Lower leg skin (tissue), 4 donors: ENCODE measurements at regions of chr13 and their contacts with region 1.

Region 1: DNA sequence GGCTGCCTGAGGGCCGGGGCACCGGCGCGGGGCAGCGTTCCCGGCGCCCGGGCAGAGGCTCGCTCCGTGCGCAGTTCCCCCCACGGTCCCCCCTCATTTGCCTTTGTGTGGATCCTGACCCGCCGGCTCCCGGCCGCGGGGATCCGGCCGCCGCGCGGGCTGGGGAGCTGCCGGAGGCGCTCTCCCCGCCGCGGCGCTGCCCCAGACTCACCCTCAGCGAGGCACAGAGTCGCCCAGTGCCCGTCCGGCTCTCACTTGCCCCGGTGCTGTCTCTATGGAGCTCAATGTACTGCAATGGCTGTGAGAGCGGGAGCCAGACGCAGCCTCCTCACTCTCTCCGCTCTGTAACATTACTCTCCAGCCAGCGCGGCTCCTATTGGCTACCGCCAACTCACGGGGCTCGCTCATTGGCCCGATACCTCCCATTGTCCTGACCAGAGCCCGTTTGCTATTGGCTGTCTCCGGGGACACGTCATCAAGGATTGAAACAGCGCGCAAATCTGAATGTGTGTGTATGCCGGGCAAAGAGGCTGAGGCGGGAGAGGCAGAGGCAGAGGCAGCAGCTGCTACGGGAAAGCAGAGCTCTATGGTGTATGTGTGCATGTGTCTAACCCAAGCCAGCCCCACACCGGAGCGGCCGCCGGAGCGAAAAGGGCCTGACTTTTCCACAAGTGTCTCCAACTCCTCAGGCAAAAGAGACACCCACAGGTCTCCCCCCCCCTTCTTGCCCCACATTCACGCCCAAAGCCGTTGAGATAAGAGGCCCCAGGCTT is at the start of gene HMGB1:
- DNase-seq: peak; percentile 99 to 100
- H3K4me3 ChIP-seq: peak within 1 kb of the TSS; percentile 73
- CTCF ChIP-seq: no peak
- POLR2A ChIP-seq: peak in 1 of 2 donors; percentile 75
- total RNA-seq, gene HMGB1: 158 to 262 (median 208) TPM

Region 2: DNA sequence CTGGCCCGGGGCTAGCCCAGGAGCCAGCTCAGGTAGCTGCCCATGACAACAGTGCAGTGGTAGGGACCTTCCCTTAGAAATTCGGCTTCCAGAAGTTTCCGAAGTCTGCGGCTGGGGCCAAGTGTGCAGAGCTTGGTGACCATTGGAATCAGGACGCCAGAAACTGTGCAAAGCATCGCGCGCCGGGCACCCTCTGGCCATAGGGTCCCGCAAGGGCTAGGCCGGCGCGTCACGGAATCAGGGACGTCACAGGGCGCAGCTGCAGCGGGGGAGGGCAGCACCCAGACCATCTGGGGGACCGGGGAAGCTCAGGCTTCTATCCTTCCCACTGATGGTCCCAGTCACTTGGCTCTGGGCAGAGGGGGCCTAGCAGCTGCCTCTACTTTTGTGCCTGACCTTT is 1426.6 kb before region 1 on chr13:
- intact Hi-C with region 1: no loop called
- DNase-seq: no peak
- H3K4me3 ChIP-seq: no peak overlapping the region
- CTCF ChIP-seq: no peak
- POLR2A ChIP-seq: no peak

Region 3: DNA sequence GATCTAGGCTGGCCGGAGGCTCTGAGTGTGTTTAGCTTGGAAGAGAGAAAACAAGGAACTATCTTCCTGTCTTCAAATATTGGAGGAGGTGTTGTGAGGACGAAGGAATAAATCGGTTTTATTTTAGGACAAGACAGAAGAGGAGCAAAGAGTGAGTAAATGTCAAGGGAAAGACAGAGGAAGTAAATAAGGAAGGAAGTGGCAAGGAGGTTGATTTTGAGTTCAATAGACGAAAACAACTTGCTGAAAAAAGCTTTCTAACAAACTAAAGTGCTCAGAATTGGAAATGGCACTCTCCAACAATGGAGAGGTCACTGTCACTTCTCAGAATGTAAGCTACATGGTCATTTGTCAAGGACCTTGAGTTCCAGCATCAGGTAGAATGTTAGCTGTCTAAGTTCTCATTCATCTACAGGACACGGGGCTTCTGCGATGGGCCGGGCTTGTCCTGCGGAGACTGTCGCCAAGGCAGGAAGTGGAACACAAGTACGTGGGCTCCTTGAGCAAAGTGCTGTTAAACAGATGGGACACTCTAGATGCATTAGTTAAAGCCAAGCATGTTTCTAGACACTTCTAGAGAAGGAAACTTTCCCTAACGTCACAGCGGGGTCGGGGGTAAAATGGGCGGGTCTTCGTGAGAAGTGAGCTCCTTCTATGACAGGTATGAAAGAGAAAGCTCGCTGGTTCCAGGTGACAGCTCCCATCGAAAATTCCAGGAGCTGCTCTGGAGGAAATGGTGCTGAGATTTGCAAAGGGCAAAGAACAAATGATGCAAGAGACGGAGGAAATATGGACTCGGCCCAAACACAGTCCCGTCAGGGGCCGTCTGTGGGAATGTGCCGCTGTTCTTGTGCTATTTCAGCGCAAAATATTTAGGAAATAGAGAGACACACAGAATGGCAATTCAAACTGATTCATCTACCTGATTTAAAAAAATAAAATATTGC is 511.4 kb before region 1 on chr13:
- intact Hi-C with region 1: no loop called
- DNase-seq: no peak
- H3K4me3 ChIP-seq: no peak overlapping the region
- CTCF ChIP-seq: no peak
- POLR2A ChIP-seq: no peak

Region 4: DNA sequence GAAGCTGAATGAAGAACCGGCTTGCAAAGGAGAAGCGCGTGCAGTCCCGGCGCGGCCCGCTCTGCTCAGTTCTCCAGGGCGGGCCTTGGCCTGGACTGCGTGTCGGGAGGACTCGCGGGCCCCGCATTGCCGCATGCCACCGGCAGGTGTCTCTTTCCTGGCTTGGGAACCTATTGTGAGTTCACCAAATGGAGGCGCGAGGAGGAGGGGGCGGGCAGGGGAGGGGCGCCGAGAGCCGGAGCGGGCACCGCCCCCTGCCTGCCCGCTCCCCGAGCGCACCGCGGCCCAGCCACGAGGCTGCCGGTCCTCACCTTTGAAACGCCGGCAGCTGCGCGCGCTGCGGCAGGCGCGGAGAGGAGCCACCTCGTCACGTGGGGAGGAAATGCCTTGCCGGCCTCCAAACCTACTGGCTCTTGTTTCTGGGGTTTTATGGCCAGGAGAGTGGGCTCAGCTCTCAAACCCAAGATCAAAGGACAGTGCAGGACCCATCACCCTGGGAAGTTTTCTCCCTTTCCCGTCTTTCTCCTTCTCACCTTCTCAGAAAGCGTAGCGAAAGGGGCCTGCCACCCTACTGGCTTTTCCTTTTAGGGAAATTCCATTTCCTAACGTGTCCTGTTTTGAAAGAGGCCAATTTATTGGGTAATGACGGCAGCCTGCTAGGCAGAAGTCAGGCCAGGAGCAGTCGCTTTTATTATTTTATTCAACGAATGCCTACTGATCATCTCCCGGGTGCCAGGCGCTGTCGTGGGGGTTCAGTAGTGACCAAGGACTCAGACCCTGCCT is 57.3 kb before region 1 on chr13:
- intact Hi-C with region 1: loop called (anchors 5 kb)
- DNase-seq: peak; percentile 94 to 99
- H3K4me3 ChIP-seq: no peak overlapping the region
- CTCF ChIP-seq: peak in 1 of 3 donors; percentile 51
- POLR2A ChIP-seq: no peak

Region 5: GRCh38 chr13:30617315-30618185 is 151.8 kb after region 1 on chr13 and contains the start of gene USPL1:
- intact Hi-C with region 1: no loop called
- DNase-seq: peak; percentile 97 to 100
- H3K4me3 ChIP-seq: peak within 1 kb of the TSS; percentile 77
- CTCF ChIP-seq: peak in 1 of 3 donors; percentile 75
- POLR2A ChIP-seq: peak in 1 of 2 donors; percentile 96
- total RNA-seq, gene USPL1: 16.0 to 20.8 (median 18.2) TPM

Region 6: GRCh38 chr13:30829145-30829832 is 363.5 kb after region 1 on chr13:
- intact Hi-C with region 1: no loop called
- DNase-seq: no peak
- H3K4me3 ChIP-seq: no peak overlapping the region
- CTCF ChIP-seq: no peak
- POLR2A ChIP-seq: no peak